Activated CD4-positive, alpha-beta memory T cell treated with anti-CD3 and anti-CD28 coated beads, Interleukin-2, amount 10 ng/mL, durations not matched to agents 7 days and 5 days (primary cell): ENCODE measurements at regions of chr12 and their contacts with region 1.

Region 1: GRCh38 chr12:49130151-49131050 is 794 bp downstream of the TUBA1B start:
- DNase-seq: peak; percentile 92
- H3K4me3 Mint-ChIP-seq: peak overlapping the region; percentile 96
- H3K27ac Mint-ChIP-seq: peak overlapping the region; percentile 97
- H3K4me1 Mint-ChIP-seq: peaks cover 54% of the 10 kb centered on the region
- H3K27me3 Mint-ChIP-seq: no peaks in the 10 kb centered on the region

Region 2: GRCh38 chr12:49060237-49061156 is 69.9 kb before region 1 on chr12 and contains the start of gene KMT2D:
- CTCF ChIA-PET with region 1: interaction called, 8 read pairs
- POLR2A ChIA-PET with region 1: interaction called, 47 read pairs
- DNase-seq: peak; percentile 88
- H3K4me3 Mint-ChIP-seq: peak within 1 kb of the TSS; percentile 95
- H3K27ac Mint-ChIP-seq: peak within 1 kb of the TSS; percentile 91
- H3K4me1 Mint-ChIP-seq: peaks cover 50% of the 10 kb centered on the region
- H3K27me3 Mint-ChIP-seq: no peaks in the 10 kb centered on the region
- total RNA-seq, gene KMT2D: 82.3 to 87.8 TPM

Region 3: DNA sequence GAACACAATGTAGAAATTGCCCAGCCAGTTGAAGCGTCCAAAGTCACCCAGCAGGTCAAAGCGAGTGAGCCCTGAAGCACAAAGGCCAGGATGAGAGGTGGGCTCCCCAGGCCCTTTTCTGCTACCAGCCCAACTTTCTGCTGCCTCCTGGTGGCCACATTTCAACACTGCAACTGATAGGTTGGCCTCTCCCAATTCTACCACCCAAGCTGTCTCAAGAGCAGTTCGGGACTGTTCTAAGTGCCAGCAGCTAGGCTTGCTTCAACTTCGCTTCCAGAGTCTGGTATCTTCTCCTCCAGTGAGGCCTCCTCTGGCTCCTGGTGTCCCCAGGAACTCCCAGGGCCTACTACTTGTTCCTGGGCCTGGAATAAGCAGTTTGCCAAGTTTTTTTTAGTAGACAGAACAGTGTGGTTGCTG is 32.4 kb before region 1 on chr12:
- CTCF ChIA-PET with region 1: interaction called, 19 read pairs
- POLR2A ChIA-PET with region 1: interaction called, 81 read pairs
- DNase-seq: peak; percentile 69
- H3K4me3 Mint-ChIP-seq: no peak overlapping the region
- H3K27ac Mint-ChIP-seq: no peak overlapping the region
- H3K4me1 Mint-ChIP-seq: peaks cover 16% of the 10 kb centered on the region
- H3K27me3 Mint-ChIP-seq: peaks cover 25% of the 10 kb centered on the region

Region 4: GRCh38 chr12:49188914-49189367 is 58.5 kb after region 1 on chr12 and contains the start of gene TUBA1A:
- CTCF ChIA-PET with region 1: interaction called, 44 read pairs
- POLR2A ChIA-PET with region 1: interaction called, 261 read pairs
- DNase-seq: peak; percentile 98
- H3K4me3 Mint-ChIP-seq: peak within 1 kb of the TSS; percentile 81
- H3K27ac Mint-ChIP-seq: peak within 1 kb of the TSS; percentile 94
- H3K4me1 Mint-ChIP-seq: peaks cover 30% of the 10 kb centered on the region
- H3K27me3 Mint-ChIP-seq: peaks cover 3% of the 10 kb centered on the region
- total RNA-seq, gene TUBA1A: 106 to 109 TPM

Region 5: DNA sequence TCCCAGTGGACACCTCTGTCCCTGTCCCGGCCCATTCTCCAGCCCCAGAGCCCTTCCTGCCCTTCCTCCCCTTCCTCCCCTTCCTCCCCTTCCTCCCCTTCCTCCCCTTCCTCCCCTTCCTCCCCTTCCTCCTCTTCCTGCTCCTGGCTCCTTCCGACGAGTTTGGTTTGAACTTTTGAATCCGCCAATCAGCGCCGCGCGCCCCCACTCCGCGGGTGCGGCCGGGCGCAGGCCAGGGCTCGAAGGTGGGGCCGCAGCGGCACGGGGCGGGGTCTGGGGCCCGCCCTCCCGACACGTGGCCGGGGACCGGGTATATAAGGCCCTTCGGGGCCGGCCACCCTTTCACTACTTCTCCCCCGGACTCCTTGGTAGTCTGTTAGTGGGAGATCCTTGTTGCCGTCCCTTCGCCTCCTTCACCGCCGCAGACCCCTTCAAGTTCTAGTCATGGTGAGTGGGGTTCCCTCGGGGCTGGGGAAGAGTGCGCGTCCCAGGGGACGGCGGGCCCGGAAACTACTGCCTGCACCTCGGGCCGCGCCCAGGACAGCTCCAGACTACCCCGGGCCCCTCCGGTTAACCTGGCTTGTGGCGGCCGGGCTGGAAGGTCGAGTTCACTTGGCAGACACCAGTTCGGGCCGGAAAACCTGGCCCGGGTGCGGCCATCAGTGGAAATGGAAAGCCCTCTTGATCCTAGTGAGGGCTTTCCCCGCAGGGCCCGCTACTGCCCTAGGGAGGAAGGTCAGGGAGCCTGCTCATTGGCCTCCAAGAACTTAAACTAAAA is 134.5 kb after region 1 on chr12 and contains the start of gene TUBA1C:
- CTCF ChIA-PET with region 1: interaction called, 8 read pairs
- POLR2A ChIA-PET with region 1: interaction called, 132 read pairs
- DNase-seq: peak; percentile 93
- H3K4me3 Mint-ChIP-seq: peak within 1 kb of the TSS; percentile 95
- H3K27ac Mint-ChIP-seq: peak within 1 kb of the TSS; percentile 95
- H3K4me1 Mint-ChIP-seq: peaks cover 56% of the 10 kb centered on the region
- H3K27me3 Mint-ChIP-seq: no peaks in the 10 kb centered on the region
- total RNA-seq, gene TUBA1C: 250 to 262 TPM